ENCODE measurements at regions of chr17 and their contacts with region 1.

Region 1: GRCh38 chr17:29148790-29149430 is 31.3 kb downstream of the MYO18A start:
- DNase-seq: peak; percentile 57
- H3K4me3 ChIP-seq: peak overlapping the region; percentile 35 to 76 (median 54)
- H3K27ac ChIP-seq: peak overlapping the region; percentile 82 to 90 (median 88)
- H3K4me1 ChIP-seq: peaks cover 26 to 73% (median 44%) of the 10 kb centered on the region in 3 donors
- H3K27me3 ChIP-seq: no peaks in the 10 kb centered on the region
- CTCF ChIP-seq: peak; percentile 92 to 99 (median 96)
- POLR2A ChIP-seq: peak in 1 of 4 donors; percentile 46

Region 2: GRCh38 chr17:28661635-28662537 is 487.0 kb before region 1 on chr17 and contains the starts of genes SDF2 and SUPT6H:
- intact Hi-C with region 1: no loop called
- DNase-seq: peak; percentile 63
- H3K4me3 ChIP-seq: peak within 1 kb of the TSS; percentile 52 to 92 (median 89)
- H3K27ac ChIP-seq: peak within 1 kb of the TSS; percentile 93 to 99 (median 99)
- H3K4me1 ChIP-seq: peaks cover 0 to 62% (median 35%) of the 10 kb centered on the region in 3 donors
- H3K27me3 ChIP-seq: no peaks in the 10 kb centered on the region
- CTCF ChIP-seq: no peak
- POLR2A ChIP-seq: peak in 3 of 4 donors; percentile 45 to 90 (median 69)
- total RNA-seq, gene SDF2: 20.3 to 38.3 (median 34.6) TPM
- total RNA-seq, gene SUPT6H: 26.4 to 59.3 (median 48.8) TPM

Region 3: GRCh38 chr17:29180034-29180787 is 31.3 kb after region 1 on chr17 and contains the start of gene MYO18A:
- intact Hi-C with region 1: loop called (anchors 5 kb)
- DNase-seq: no peak
- H3K4me3 ChIP-seq: peak within 1 kb of the TSS; percentile 45 to 83 (median 69)
- H3K27ac ChIP-seq: peak within 1 kb of the TSS; percentile 91 to 99 (median 98)
- H3K4me1 ChIP-seq: peaks cover 37 to 69% (median 50%) of the 10 kb centered on the region in 3 donors
- H3K27me3 ChIP-seq: no peaks in the 10 kb centered on the region
- CTCF ChIP-seq: peak; percentile 82 to 98 (median 93)
- POLR2A ChIP-seq: peak in 2 of 4 donors; percentile 32 to 54
- total RNA-seq, gene MYO18A: 44.0 to 74.9 (median 68.5) TPM

Region 4: DNA sequence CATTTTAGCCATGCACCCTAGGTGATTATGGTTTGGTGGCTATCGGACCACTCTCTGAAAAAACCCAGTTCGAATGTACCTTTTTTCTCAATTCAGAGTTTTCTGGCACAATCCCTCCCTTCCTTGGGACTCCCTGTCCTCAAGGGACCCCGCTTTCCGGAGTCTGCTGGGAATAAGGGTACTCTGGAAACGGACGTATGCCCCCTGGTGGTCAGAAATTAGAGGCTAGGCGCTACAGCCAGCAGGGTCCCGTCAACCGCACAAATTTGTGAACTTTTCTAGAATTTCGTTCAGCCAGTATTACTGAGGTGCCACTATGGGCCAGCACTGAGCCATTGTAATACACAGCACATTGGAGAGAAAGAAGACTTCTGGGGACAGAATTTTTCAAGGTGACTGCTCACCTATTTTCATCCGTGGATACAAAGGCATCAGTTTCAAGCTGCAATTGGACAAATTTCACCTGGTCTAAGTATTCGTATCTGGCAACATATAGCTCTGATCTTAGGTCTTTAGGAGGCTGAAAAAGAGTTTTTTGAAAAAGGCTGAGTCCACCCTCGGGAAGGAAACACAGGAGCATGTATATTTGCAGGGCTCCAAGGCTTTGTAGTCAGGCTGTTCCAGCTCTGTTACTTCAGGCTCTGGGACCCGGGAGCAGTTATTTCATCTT is 70.6 kb after region 1 on chr17:
- intact Hi-C with region 1: loop called (anchors 5 kb)
- DNase-seq: no peak
- H3K4me3 ChIP-seq: no peak overlapping the region
- H3K27ac ChIP-seq: no peak overlapping the region
- H3K4me1 ChIP-seq: peaks cover 0 to 13% (median 5%) of the 10 kb centered on the region in 3 donors
- H3K27me3 ChIP-seq: no peaks in the 10 kb centered on the region
- CTCF ChIP-seq: peak; percentile 89 to 95 (median 91)
- POLR2A ChIP-seq: no peak

Region 5: GRCh38 chr17:29263916-29264315 is 115.0 kb after region 1 on chr17:
- intact Hi-C with region 1: no loop called
- DNase-seq: no peak
- H3K4me3 ChIP-seq: no peak overlapping the region
- H3K27ac ChIP-seq: no peak overlapping the region
- H3K4me1 ChIP-seq: peaks cover 0 to 5% (median 0%) of the 10 kb centered on the region in 3 donors
- H3K27me3 ChIP-seq: no peaks in the 10 kb centered on the region
- CTCF ChIP-seq: no peak
- POLR2A ChIP-seq: no peak

Measured in esophagus squamous epithelium (tissue), 5 donors.